Activated CD4-positive, alpha-beta T cell treated with anti-CD3 and anti-CD28 coated beads, Interleukin-2, amount 10 ng/mL, durations not matched to agents 24 days and 14 days (primary cell): ENCODE measurements at regions of chr1 and their contacts with region 1.

Region 1: GRCh38 chr1:168225476-168226190 is at the start of gene SFT2D2:
- DNase-seq: peak; percentile 95
- H3K4me3 Mint-ChIP-seq: peak within 1 kb of the TSS; percentile 84
- H3K27ac Mint-ChIP-seq: peak within 1 kb of the TSS; percentile 95
- H3K4me1 Mint-ChIP-seq: peaks cover 50% of the 10 kb centered on the region
- H3K27me3 Mint-ChIP-seq: no peaks in the 10 kb centered on the region
- total RNA-seq, gene SFT2D2: 64.3 and 65.7 TPM in 2 replicates

Region 2: GRCh38 chr1:167881069-167881468 is 344.6 kb before region 1 on chr1:
- intact Hi-C with region 1: no loop called
- DNase-seq: no peak
- H3K4me3 Mint-ChIP-seq: no peak overlapping the region
- H3K27ac Mint-ChIP-seq: no peak overlapping the region
- H3K4me1 Mint-ChIP-seq: no peaks in the 10 kb centered on the region
- H3K27me3 Mint-ChIP-seq: peaks cover 7% of the 10 kb centered on the region

Region 3: GRCh38 chr1:167984886-167985489 is 240.6 kb before region 1 on chr1:
- intact Hi-C with region 1: no loop called
- DNase-seq: peak; percentile 58
- H3K4me3 Mint-ChIP-seq: no peak overlapping the region
- H3K27ac Mint-ChIP-seq: peak overlapping the region; percentile 3
- H3K4me1 Mint-ChIP-seq: peaks cover 6% of the 10 kb centered on the region
- H3K27me3 Mint-ChIP-seq: no peaks in the 10 kb centered on the region

Region 4: DNA sequence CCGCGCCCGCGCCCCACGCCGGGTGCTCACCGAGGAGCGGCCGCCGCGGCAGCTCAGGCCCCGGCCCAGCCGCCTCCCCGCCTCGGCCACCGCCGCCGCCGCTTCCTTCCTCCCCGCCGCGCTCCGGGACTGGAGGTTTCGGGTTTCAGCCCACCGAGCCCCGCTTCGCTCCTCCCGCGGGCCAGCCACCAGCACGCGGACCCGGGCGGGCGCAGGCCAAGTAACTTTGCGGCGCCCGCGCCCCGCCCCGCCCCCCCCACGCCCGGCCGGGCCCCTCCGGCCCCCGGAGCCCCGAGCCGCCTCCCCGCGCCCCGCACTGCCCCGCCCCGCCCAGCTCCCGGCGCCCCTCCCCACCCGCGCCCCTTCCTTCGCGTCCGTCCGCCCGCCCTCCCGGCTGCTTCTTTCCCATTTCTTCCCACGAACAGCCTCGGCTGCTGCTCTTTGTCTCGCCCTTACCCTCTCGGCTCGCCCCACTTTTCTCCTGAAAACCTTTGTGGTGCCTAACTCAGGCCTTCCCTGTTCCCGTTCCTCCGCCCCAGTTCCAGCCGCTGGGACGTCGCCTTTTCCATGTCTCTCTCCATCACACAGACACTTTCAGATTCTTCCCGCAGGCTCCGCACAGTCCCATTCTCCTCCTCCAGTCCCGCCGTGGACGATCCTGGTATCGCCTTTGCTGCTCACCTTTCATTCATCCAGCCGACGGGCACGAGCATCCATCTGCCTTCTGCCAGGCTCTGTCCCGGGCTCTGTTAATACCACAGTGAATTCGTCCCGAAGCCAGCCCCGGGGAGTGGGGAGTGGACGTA is 88.7 kb before region 1 on chr1 and contains the start of gene GPR161:
- intact Hi-C with region 1: loop called (anchors 5 kb)
- DNase-seq: peak; percentile 79
- H3K4me3 Mint-ChIP-seq: peak within 1 kb of the TSS; percentile 91
- H3K27ac Mint-ChIP-seq: peak within 1 kb of the TSS; percentile 51
- H3K4me1 Mint-ChIP-seq: peaks cover 15% of the 10 kb centered on the region
- H3K27me3 Mint-ChIP-seq: peaks cover 58% of the 10 kb centered on the region
- total RNA-seq, gene GPR161: 0.51 and 0.85 TPM in 2 replicates